Stomach (tissue), 19 donors: ENCODE measurements at regions of chr17 and their contacts with region 1.

Region 1: GRCh38 chr17:12277827-12278226 is 257.1 kb downstream of the MAP2K4 start:
- DNase-seq: no peak
- H3K4me3 ChIP-seq: no peak overlapping the region
- H3K27ac ChIP-seq: no peak overlapping the region
- H3K4me1 ChIP-seq: no peaks in the 10 kb centered on the region
- H3K27me3 ChIP-seq: no peaks in the 10 kb centered on the region
- CTCF ChIP-seq: no peak
- EP300 ChIP-seq: no peak
- POLR2A ChIP-seq: no peak

Region 2: DNA sequence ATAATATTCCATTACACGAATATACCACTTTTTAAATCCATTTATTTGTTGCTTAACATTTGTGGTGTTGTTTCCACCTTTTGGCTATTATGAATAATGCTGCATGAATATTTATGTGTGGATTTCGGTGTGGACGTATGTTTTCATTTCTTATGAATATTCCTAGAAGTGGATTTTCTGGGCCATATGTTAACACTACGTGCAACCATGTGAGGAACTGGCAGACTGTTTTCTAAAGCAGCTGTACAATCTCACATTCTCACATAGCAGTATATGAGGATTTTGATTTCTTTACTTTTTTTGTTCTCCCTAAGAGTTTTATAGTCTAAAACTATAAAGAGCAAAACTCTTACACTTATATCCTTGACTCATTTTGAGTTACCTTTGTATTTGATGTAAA is 113.7 kb before region 1 on chr17:
- intact Hi-C with region 1: no loop called
- DNase-seq: no peak
- H3K4me3 ChIP-seq: no peak overlapping the region
- H3K27ac ChIP-seq: no peak overlapping the region
- H3K4me1 ChIP-seq: no peaks in the 10 kb centered on the region
- H3K27me3 ChIP-seq: no peaks in the 10 kb centered on the region
- CTCF ChIP-seq: no peak
- EP300 ChIP-seq: no peak
- POLR2A ChIP-seq: no peak

Region 3: GRCh38 chr17:12415031-12415430 is 137.2 kb after region 1 on chr17:
- intact Hi-C with region 1: no loop called
- DNase-seq: peak in 1 of 2 donors; percentile 57
- H3K4me3 ChIP-seq: no peak overlapping the region
- H3K27ac ChIP-seq: peak overlapping the region in 4 of 5 donors; percentile 7 to 68 (median 48)
- H3K4me1 ChIP-seq: peaks cover 0 to 12% (median 3%) of the 10 kb centered on the region in 4 donors
- H3K27me3 ChIP-seq: no peaks in the 10 kb centered on the region
- CTCF ChIP-seq: no peak
- EP300 ChIP-seq: no peak
- POLR2A ChIP-seq: no peak

Region 4: GRCh38 chr17:12431188-12431587 is 153.4 kb after region 1 on chr17:
- intact Hi-C with region 1: loop called (anchors 10 kb)
- DNase-seq: no peak
- H3K4me3 ChIP-seq: no peak overlapping the region
- H3K27ac ChIP-seq: no peak overlapping the region
- H3K4me1 ChIP-seq: no peaks in the 10 kb centered on the region
- H3K27me3 ChIP-seq: no peaks in the 10 kb centered on the region
- CTCF ChIP-seq: no peak
- EP300 ChIP-seq: no peak
- POLR2A ChIP-seq: no peak